ENCODE measurements at regions of chr6 and their contacts with region 1.

Region 1: DNA sequence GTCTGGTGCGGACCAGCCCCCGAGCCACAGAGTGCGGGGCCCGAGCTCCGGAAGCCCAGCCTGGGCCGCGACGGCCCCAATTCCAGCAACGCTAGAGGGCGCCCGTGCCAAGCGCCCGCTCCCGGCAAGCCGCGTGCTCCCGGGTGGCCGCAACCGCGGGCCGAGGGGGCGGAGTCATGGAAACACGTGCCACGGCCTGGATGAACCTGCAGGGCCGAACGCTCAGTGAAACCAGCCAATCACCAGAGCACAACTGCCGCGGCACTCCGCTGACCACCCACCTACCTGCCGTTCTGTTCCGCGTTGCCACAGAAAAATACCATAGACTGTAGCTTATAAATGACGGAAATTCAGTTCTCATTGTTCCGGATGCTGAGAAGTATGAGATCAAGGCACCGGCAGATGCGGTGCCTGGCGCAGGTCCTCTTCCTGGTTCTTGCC is 85.7 kb upstream of the FOXC1 start:
- DNase-seq: peak; percentile 80
- ATAC-seq: peak; percentile 82
- H3K4me3 Mint-ChIP-seq: peak overlapping the region; percentile 25
- H3K27ac Mint-ChIP-seq: peak overlapping the region; percentile 75
- H3K4me1 Mint-ChIP-seq: peaks cover 26% of the 10 kb centered on the region
- H3K27me3 Mint-ChIP-seq: peaks cover 15% of the 10 kb centered on the region

Region 2: DNA sequence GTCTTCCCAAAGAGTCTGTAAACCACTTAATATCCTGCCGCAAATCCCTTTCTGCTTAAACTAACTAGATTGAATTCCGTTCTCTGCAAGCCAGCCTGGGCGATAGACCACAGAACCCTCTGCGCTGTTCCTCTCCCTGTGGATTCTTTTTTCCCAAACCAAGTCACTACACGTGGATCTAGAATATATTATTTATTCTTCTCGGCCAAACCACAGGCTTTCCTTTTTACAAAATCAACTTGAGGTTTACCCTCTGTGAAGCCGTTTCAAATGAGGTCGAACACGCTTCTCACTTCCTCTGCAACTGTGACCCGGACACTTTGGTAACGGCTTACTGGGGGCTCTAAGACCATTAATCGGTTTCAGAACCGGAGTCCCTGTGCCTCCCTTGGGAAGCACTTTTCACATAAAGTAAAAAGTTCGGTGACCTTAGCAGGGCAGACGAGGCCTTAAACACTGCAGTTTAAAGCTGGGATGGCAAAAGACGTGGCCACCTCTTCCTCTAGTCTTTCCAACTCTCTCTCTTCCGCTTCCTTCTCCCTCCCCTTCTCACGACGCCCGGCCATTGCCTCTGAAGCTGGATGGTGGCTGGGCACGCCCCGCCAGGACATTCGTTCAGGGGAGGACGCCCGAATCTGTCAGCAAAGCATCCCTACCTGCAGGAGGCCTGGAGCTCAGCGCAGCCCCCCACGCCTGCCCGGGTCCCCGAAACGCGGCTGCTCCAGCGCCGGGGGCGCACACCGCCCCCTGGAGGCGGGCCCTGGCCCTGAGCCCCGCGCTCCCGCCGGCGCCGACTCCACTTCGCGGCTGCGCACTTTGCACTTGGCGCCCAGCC is 30.6 kb after region 1 on chr6:
- CTCF ChIA-PET with region 1: interaction called, 22 read pairs
- DNase-seq: peak; percentile 55
- ATAC-seq: peak; percentile 93
- H3K4me3 Mint-ChIP-seq: peak overlapping the region; percentile 73
- H3K27ac Mint-ChIP-seq: peak overlapping the region; percentile 65
- H3K4me1 Mint-ChIP-seq: peaks cover 15% of the 10 kb centered on the region
- H3K27me3 Mint-ChIP-seq: peaks cover 35% of the 10 kb centered on the region

Region 3: DNA sequence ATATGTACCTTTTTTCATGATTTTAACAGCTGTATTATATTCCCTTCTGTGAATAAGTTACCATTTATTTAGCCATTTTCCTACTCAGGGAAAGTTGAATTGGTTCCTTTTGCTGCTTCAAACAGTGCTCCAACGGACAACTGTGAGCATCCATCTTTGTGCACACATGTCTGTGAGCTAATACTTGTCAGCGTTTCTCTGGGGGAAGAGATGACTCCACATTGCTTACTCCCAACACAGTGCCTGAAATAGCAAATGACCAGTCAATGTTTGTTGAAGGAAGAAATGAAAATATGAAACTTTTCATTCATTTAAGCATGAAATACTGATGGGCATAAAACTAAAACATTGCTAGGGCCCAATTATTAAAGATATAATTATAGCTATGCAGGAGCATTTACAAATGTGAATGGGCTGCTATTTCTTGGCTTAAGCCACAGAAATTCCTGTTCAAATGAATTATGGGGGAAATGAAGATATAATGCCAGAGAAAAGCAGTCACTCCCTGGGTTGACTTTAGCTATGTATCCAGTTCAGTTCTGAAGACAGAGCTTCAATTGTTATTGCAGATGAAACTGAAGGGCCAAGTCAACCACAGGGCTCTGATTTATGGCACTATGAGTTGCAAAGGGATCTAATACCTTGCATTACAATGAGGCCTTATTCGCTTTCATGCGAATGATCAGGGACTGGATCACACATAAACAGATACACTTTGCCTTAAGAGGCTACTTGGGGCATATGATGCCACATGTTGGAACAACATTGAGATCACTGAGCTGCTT is 38.3 kb after region 1 on chr6:
- CTCF ChIA-PET with region 1: interaction called, 13 read pairs
- DNase-seq: no peak
- ATAC-seq: no peak
- H3K4me3 Mint-ChIP-seq: no peak overlapping the region
- H3K27ac Mint-ChIP-seq: no peak overlapping the region
- H3K4me1 Mint-ChIP-seq: no peaks in the 10 kb centered on the region
- H3K27me3 Mint-ChIP-seq: peaks cover 38% of the 10 kb centered on the region